AG04450 (cell line): ENCODE measurements at regions of chr2 and their contacts with region 1.

Region 1: GRCh38 chr2:25851740-25852503 is 26.4 kb downstream of the ASXL2 start:
- DNase-seq: peak; percentile 65
- H3K4me3 ChIP-seq: peak overlapping the region; percentile 13; the same call in 1 of the 2 replicates
- H3K27ac ChIP-seq: peak overlapping the region; percentile 70
- H3K27me3 ChIP-seq: no peaks in the 10 kb centered on the region
- CTCF ChIP-seq: peak; percentile 62

Region 2: DNA sequence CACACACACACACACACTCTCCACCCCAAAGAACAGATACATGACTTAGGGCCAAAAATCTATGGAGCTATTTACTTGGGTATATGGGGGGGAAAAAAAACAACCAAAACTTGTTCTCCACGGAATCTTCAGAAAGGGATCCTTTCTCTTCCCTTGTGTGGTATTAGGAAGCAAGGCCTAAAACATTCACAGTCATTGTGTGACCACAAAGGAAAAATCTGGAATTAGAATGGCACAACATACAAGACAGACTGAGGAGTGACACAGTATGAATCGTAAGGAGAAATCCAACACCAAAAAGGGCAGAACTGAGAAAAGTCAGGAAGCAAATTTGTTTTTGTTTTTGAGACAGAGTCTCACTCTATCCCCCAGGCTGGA is 43.9 kb before region 1 on chr2:
- CTCF ChIA-PET with region 1: no interaction called
- POLR2A ChIA-PET with region 1: no interaction called
- DNase-seq: no peak
- H3K4me3 ChIP-seq: no peak overlapping the region
- H3K27ac ChIP-seq: no peak overlapping the region
- H3K27me3 ChIP-seq: no peaks in the 10 kb centered on the region
- CTCF ChIP-seq: no peak

Region 3: DNA sequence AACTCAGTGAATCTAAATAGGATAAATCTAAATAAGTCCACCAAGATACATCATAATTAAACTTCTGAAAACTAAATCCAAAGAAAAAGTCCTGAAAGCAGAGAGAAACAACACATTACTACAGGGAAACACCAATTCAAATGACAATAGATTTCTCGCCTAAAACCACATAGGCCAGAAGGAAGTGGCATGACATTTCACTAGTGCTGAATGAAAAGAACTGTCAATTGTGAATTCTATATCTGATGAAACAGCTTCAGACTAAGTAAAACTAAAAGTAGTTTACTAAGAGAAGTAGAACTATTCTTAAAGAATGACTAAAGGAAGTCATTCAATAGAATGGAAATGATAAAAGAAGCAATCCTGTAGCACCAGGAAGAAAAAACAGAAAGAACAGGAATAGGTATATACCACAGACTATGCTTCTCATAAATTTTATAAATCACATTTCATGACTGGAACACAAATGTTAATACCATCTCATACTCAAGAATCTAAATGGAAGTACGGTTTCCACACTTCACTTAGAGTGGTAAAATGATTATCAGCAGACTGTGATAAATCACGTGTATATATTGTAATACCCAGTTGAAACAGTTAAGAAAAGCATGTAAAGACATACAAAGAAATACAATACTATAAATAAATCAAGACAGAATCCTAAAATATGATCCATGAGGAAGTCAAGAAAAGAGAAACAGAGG is 20.0 kb before region 1 on chr2:
- CTCF ChIA-PET with region 1: interaction called, 17 read pairs
- POLR2A ChIA-PET with region 1: no interaction called
- DNase-seq: no peak
- H3K4me3 ChIP-seq: no peak overlapping the region
- H3K27ac ChIP-seq: no peak overlapping the region
- H3K27me3 ChIP-seq: no peaks in the 10 kb centered on the region
- CTCF ChIP-seq: no peak

Region 4: DNA sequence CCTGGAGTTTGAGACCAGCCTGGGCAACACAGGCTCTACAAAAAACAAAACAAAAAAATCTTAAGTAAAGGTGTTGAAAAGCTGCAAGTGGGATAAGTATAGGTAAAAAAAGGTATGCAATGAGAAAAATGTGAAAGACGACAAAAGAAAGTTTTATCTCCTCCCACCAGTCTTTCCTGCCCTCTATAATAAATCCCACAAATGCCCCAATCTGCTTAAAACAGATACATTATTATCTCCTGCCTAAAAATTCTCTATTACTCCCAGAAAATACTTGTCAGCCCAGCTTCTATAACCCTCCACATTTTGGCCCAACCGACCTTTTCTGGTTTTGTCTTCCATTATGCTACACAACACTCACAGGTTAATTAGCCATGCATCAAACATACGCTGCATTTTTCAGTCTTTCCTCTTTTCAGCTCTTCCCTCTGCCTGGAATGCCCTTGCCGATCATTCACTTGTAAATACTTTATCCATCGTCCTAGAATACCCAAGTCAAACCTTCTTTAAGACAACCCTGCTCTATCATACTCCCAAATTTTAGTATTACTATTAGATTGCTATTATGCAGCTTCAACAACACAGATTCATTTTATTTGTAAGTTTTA is 15.6 kb after region 1 on chr2:
- CTCF ChIA-PET with region 1: interaction called, 41 read pairs
- POLR2A ChIA-PET with region 1: no interaction called
- DNase-seq: no peak
- H3K4me3 ChIP-seq: no peak overlapping the region
- H3K27ac ChIP-seq: no peak overlapping the region
- H3K27me3 ChIP-seq: no peaks in the 10 kb centered on the region
- CTCF ChIP-seq: no peak

Region 5: DNA sequence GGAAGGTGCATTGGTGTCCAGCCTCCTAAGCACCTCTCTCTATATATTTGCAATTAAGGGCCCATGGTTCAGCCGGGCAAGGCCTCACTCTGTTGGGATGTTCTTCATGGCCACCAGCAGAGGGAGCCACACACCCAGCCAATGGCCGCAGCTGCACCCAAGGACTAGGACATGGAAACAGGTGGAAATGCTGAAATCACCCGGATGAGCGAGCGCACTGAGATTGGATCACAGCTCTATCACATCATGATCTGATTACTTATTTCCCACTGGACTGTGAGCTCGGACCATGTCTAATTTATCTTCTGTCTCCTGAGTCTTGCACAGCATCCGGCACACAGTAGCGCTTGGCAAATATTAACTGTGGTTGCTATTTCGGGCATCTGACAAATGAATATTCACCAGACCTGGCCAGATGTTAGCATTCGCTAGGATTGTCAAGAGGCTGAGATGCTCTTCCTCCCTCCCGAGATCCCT is 99.2 kb after region 1 on chr2:
- CTCF ChIA-PET with region 1: interaction called, 48 read pairs
- POLR2A ChIA-PET with region 1: no interaction called
- DNase-seq: peak; percentile 58
- H3K4me3 ChIP-seq: no peak overlapping the region
- H3K27ac ChIP-seq: no peak overlapping the region
- H3K27me3 ChIP-seq: no peaks in the 10 kb centered on the region
- CTCF ChIP-seq: peak; percentile 97